Endothelial cell of umbilical vein (primary cell): ENCODE measurements at regions of chr2 and their contacts with region 1.

Region 1: DNA sequence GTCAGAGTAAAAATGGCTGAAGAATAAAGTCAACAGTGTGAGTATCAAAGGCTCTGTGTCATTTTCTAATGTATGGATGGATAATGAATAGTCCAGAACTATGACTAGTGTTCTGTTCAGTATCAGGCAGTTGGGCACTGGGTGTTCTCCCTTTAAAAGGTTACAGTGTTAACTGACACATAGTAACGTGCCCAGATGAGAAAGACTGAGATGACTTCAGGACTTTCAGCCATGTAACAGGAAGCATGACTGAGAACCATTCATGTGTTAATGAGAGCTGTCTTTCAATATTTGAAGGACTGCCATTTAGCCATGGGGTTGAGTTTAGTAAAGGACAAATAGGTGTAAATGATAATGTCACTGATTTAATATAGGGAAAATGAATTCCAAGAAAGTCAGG is 187.1 kb downstream of the GULP1 start:
- DNase-seq: peak; percentile 10
- H3K4me3 ChIP-seq: no peak overlapping the region
- H3K27ac ChIP-seq: no peak overlapping the region
- H3K4me1 ChIP-seq: peaks cover 4% of the 10 kb centered on the region
- H3K27me3 ChIP-seq: no peaks in the 10 kb centered on the region
- CTCF ChIP-seq: no peak
- POLR2A ChIP-seq: no peak

Region 2: DNA sequence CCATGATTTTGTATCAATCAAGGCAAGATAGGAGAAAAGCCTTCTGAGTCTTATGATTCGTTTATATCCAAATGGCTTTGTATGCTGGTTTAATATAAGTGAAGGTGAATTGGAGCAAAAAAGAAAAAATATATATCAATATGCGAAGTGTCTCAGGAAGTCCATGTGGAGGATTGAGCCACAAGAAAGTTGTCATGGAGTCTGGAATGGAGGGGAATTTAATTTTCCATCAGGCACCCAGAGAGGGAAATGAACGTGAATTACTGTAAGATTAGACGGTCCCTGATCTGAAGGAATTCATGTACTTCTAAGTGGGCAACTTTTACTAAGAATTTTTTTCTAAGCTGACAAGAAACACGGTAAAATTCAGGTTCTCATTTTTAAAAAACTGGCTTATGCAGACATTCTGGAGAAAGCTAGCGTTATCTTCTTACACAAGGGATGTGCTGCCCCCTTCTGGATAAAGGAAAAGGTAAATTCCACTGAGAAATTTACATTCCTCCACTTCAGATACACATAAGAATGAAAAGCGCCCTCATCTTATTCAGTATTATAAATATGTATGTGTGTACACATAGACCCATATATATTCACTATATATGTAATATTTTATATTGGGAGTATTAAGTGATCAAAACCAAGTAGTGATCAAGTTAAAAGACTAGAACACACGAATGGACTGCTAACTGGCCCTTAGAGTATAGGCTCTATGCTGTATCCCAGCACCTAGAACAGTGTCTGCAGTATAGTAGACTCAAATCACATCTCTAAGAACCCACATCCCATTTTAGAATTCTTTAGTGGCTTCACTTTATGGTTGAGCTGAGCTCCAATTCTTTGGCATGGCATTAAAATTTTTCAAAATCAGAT is 635.5 kb before region 1 on chr2:
- CTCF ChIA-PET with region 1: no interaction called
- POLR2A ChIA-PET with region 1: no interaction called
- dilution Hi-C with region 1: no loop called
- intact Hi-C with region 1: no loop called
- DNase-seq: peak; percentile 75
- H3K4me3 ChIP-seq: no peak overlapping the region
- H3K27ac ChIP-seq: no peak overlapping the region
- H3K4me1 ChIP-seq: no peaks in the 10 kb centered on the region
- H3K27me3 ChIP-seq: no peaks in the 10 kb centered on the region
- CTCF ChIP-seq: peak; percentile 39 to 43
- POLR2A ChIP-seq: no peak

Region 3: GRCh38 chr2:188280811-188281222 is 197.9 kb before region 1 on chr2:
- CTCF ChIA-PET with region 1: no interaction called
- POLR2A ChIA-PET with region 1: no interaction called
- dilution Hi-C with region 1: no loop called
- intact Hi-C with region 1: no loop called
- DNase-seq: peak; percentile 31
- H3K4me3 ChIP-seq: no peak overlapping the region
- H3K27ac ChIP-seq: no peak overlapping the region
- H3K4me1 ChIP-seq: no peaks in the 10 kb centered on the region
- H3K27me3 ChIP-seq: no peaks in the 10 kb centered on the region
- CTCF ChIP-seq: no peak
- POLR2A ChIP-seq: no peak

Region 4: DNA sequence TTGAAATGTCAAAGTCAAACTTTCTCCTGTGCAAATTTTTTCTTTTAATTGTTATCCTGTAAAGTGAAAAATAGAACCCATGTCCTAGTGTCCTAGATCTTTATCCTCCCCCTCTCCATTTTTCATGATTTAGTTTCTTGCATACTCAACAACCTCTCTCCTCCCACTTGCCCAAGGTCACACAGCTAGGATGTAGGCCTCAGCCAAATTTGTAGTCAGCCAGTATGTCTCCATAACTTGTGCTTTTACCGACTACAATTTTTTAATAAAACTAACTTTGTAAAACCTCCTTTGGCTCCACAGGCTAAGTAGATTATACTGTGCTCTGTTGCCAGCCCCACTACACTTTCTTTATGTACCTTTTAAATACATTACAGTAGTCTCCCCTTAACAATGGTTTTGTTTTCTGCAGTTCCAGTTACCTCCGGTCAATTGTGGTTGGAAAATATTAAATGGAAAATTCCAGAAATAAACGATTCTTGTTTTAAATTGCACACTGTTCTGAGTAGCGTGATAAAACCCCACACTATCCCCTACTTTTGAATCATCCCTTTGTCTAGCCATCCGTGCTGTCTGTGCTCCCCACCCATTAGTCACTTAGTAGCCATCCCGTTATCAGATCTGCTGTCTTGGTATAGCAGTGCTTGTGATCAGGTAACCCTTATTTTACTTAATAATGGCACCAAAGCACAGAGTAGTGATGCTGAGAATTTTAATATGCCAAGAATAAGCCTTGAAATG is 164.2 kb before region 1 on chr2:
- CTCF ChIA-PET with region 1: no interaction called
- POLR2A ChIA-PET with region 1: no interaction called
- dilution Hi-C with region 1: no loop called
- intact Hi-C with region 1: no loop called
- DNase-seq: peak; percentile 33
- H3K4me3 ChIP-seq: no peak overlapping the region
- H3K27ac ChIP-seq: peak overlapping the region; percentile 80
- H3K4me1 ChIP-seq: peaks cover 57% of the 10 kb centered on the region
- H3K27me3 ChIP-seq: no peaks in the 10 kb centered on the region
- CTCF ChIP-seq: no peak
- POLR2A ChIP-seq: no peak

Region 5: GRCh38 chr2:188381614-188382013 is 97.1 kb before region 1 on chr2:
- CTCF ChIA-PET with region 1: no interaction called
- POLR2A ChIA-PET with region 1: no interaction called
- dilution Hi-C with region 1: no loop called
- intact Hi-C with region 1: no loop called
- DNase-seq: peak; percentile 83
- H3K4me3 ChIP-seq: peak overlapping the region in 1 of 3 experiments; percentile 12
- H3K27ac ChIP-seq: peak overlapping the region; percentile 73
- H3K4me1 ChIP-seq: peaks cover 28% of the 10 kb centered on the region
- H3K27me3 ChIP-seq: no peaks in the 10 kb centered on the region
- CTCF ChIP-seq: no peak
- POLR2A ChIP-seq: no peak

Region 6: GRCh38 chr2:188551671-188552070 is 72.9 kb after region 1 on chr2:
- CTCF ChIA-PET with region 1: no interaction called
- POLR2A ChIA-PET with region 1: no interaction called
- dilution Hi-C with region 1: no loop called
- intact Hi-C with region 1: loop called (anchors 2 kb)
- DNase-seq: peak; percentile 13
- H3K4me3 ChIP-seq: no peak overlapping the region
- H3K27ac ChIP-seq: no peak overlapping the region
- H3K4me1 ChIP-seq: no peaks in the 10 kb centered on the region
- H3K27me3 ChIP-seq: no peaks in the 10 kb centered on the region
- CTCF ChIP-seq: no peak
- POLR2A ChIP-seq: no peak